Esophagus squamous epithelium (tissue), 5 donors: ENCODE measurements at regions of chr10 and their contacts with region 1.

Region 1: DNA sequence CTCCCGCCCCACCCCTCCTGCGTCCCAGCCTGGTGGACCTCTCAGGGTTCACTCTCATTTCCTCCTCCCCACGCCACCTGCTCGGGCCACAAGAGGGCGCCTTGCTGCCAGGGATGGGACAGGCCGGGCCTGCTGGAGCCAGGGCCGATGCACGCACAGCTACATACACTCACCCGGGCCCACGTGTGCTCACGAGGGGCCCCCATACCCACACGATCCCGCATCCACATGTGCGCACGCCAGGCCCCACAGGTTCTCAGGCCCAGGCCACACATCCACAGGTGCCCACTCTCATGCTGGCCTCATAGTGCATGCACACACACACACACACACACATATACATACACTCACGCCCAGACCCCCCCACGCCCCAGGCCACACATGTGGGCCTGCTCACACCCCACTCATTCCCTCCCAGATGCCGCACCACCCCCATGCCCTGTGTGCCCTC is 68.6 kb downstream of the LHPP start:
- DNase-seq: peak; percentile 37
- H3K4me3 ChIP-seq: no peak overlapping the region
- H3K27ac ChIP-seq: no peak overlapping the region
- H3K4me1 ChIP-seq: peaks cover 4 to 14% (median 6%) of the 10 kb centered on the region in 3 donors
- H3K27me3 ChIP-seq: no peaks in the 10 kb centered on the region
- CTCF ChIP-seq: peak; percentile 84 to 93 (median 89)
- POLR2A ChIP-seq: no peak

Region 2: DNA sequence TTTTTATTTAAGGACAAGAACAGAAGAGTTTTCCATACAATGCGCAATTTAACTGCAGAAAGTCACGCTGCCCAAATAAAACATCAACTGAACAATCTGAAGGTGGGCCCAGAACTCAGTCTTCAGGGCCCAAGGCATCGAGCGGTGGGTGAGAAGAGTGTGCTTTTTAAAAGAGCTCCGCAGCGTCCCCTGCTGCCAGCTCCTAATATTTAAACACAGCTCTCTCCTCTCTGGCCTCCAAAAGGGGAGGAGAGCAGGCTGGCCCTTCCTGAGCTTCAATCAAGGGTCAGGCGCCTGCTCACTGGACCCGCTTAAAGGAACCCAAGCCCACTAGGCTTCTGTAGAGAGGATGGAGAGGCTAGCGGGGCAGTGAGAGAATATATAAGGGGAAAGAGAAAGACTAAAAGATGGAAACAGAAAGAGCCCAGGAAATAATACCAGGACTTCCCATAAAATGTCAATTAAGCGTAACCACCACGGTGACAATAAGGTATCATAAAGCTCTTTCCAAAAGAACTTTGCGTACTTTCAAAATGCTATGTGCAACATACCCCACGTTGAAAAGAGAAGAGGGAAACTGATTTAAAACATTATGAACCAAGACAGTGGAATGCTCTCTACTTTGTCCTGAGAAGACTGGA is 211.2 kb after region 1 on chr10:
- intact Hi-C with region 1: loop called (anchors 5 kb)
- DNase-seq: no peak
- H3K4me3 ChIP-seq: peak overlapping the region; percentile 9 to 89 (median 78)
- H3K27ac ChIP-seq: peak overlapping the region; percentile 93 to 95 (median 94)
- H3K4me1 ChIP-seq: peaks cover 69 to 89% (median 80%) of the 10 kb centered on the region in 3 donors
- H3K27me3 ChIP-seq: no peaks in the 10 kb centered on the region
- CTCF ChIP-seq: peak; percentile 76 to 98 (median 94)
- POLR2A ChIP-seq: no peak

Region 3: DNA sequence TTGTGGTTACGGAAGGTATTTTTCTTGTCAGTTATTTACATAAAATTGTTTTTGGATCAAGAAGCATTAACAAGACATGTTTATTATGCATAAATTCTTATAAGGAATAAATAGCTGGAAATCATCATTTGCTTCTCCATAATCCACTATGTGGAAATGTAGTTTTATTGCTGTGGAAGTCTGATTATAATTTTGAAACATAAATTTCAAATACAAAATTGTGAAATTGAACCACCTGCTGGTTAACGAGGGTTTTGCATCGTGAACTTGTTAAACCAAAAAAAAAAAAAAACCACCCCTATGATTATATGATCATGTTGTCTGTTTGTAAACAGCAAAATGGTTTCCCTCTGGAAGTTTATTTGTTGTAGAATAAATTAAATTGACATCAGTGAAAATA is 297.2 kb after region 1 on chr10:
- intact Hi-C with region 1: loop called (anchors 10 kb)
- DNase-seq: no peak
- H3K4me3 ChIP-seq: no peak overlapping the region
- H3K27ac ChIP-seq: no peak overlapping the region
- H3K4me1 ChIP-seq: no peaks in the 10 kb centered on the region
- H3K27me3 ChIP-seq: no peaks in the 10 kb centered on the region
- CTCF ChIP-seq: peak in 5 of 6 experiments; percentile 30 to 64 (median 61)
- POLR2A ChIP-seq: no peak